ENCODE measurements at regions of chr19 and their contacts with region 1.

Region 1: DNA sequence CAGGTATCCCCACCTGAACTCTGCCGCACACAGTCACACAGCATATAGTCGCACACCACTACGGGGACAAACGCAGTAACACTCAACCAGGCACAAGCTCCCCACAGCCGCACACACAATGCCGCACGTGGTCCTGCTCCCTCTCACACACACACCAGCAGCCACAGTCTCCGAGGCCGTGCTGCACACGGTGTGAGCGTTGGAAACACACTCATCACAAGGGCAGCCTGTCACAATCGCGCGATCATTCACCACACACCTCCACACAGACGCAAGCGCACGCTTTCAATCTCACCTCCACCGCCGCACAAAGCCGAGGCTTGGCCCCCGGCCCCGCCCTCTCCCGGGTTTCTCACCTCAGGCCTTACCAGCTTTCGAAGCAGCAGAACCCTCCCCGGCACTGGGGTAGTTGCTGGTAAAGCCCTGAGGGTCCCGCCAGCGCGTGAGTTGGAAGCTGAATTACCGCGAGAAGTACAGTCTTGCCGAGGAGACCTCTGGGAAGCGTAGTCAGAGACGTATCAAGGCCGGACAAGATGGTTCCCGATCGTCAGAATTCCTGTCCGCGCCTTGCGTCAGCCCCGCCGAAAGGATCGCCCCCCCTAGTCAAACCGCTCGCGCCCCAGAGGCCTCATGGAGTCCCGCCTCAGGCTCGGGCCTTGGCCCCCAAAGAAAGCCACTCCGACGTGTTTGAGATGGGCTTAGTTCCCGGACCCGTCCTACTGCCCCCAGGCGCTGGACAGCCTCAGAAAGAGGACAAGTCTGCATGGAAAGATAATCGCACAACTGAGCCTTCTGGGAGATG is at the start of gene ZNF566:
- DNase-seq: peak; percentile 92
- H3K4me3 Mint-ChIP-seq: peak within 1 kb of the TSS; percentile 95
- H3K27ac Mint-ChIP-seq: peak within 1 kb of the TSS; percentile 97
- H3K4me1 Mint-ChIP-seq: peaks cover 26% of the 10 kb centered on the region
- H3K27me3 Mint-ChIP-seq: no peaks in the 10 kb centered on the region
- total RNA-seq, gene ZNF566: 8.5 to 8.7 TPM

Region 2: DNA sequence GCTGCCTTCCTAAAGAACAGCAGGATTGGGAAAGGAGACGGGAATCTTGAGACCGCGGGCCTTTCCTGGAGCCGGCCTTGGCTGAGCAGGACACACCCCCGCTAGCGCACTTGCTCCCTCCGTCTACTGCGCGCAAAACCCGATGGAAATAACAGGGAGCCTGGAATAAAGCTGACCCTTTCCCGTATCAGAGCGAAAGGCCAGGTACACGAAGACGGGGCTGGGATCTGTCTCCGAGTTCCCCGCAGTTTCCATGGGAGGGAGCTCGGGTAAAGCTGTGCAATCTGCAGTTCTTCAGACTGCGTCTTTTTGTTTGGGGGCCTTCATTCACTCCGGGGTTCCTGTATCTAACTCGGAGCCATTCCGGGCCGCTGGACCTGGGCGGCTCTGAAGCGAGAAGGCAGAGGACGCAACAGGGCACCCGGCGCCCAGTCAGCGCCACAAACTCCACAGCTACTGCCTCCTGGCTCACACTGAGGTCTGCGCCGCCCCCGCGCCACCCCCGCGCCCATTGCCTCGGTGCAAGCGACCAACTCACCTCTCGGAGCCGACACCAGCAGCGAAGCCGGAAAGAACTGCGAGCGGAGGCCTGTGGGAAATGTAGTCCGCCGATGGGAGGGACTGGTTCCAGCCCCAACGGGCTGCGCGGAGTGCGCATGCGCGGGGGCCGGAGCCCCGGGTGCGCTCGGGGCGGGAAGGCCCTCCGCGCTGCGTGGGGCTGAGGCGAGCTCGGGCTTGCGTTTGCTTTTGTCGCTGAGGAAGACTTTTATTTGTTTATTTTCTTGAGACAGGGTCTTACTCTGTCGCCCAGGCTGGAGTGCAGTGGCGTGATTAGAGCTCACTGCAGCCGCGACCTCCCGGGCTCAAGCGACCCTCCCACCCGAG is 110.5 kb before region 1 on chr19 and contains the start of gene ZFP14:
- CTCF ChIA-PET with region 1: interaction called, 3 read pairs
- POLR2A ChIA-PET with region 1: interaction called, 15 read pairs
- DNase-seq: peak; percentile 95
- H3K4me3 Mint-ChIP-seq: peak within 1 kb of the TSS; percentile 90
- H3K27ac Mint-ChIP-seq: peak within 1 kb of the TSS; percentile 71
- H3K4me1 Mint-ChIP-seq: peaks cover 12% of the 10 kb centered on the region
- H3K27me3 Mint-ChIP-seq: no peaks in the 10 kb centered on the region
- total RNA-seq, gene ZFP14: 5.1 to 5.4 TPM

Region 3: GRCh38 chr19:36418287-36419001 is 70.9 kb before region 1 on chr19 and contains the start of gene ZFP82:
- CTCF ChIA-PET with region 1: no interaction called
- POLR2A ChIA-PET with region 1: no interaction called
- DNase-seq: peak; percentile 76
- H3K4me3 Mint-ChIP-seq: peak within 1 kb of the TSS; percentile 86
- H3K27ac Mint-ChIP-seq: peak within 1 kb of the TSS; percentile 85
- H3K4me1 Mint-ChIP-seq: peaks cover 19% of the 10 kb centered on the region
- H3K27me3 Mint-ChIP-seq: peaks cover 7% of the 10 kb centered on the region
- total RNA-seq, gene ZFP82: 3.9 to 4.2 TPM

Region 4: DNA sequence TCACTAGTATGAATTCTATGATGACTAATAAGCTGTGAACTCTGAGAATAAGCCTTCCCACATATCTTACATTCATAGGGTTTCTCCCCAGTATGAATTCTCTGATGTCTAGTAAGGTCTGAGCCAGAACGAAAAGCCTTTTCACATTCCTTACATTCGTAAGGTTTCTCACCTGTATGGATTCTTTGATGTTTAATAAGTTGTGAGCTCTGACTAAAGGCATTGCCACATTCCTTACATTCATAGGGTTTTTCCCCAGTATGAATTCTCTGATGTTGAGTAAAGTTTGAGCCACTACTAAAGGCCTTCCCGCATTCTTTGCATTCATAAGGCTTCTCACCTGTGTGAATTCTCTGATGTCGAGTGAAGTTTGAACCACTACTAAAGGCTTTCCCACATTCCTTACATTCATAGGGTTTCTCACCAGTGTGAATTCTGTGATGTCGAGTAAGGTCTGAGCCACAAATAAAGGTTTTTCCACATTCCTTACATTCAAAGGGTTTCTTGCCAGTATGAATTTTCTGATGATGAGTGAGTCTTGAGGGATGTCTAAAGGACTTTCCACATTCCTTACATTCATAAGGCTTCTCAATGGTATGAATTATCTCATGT is 40.2 kb before region 1 on chr19:
- CTCF ChIA-PET with region 1: no interaction called
- POLR2A ChIA-PET with region 1: no interaction called
- DNase-seq: no peak
- H3K4me3 Mint-ChIP-seq: no peak overlapping the region
- H3K27ac Mint-ChIP-seq: no peak overlapping the region
- H3K4me1 Mint-ChIP-seq: no peaks in the 10 kb centered on the region
- H3K27me3 Mint-ChIP-seq: no peaks in the 10 kb centered on the region

Region 5: DNA sequence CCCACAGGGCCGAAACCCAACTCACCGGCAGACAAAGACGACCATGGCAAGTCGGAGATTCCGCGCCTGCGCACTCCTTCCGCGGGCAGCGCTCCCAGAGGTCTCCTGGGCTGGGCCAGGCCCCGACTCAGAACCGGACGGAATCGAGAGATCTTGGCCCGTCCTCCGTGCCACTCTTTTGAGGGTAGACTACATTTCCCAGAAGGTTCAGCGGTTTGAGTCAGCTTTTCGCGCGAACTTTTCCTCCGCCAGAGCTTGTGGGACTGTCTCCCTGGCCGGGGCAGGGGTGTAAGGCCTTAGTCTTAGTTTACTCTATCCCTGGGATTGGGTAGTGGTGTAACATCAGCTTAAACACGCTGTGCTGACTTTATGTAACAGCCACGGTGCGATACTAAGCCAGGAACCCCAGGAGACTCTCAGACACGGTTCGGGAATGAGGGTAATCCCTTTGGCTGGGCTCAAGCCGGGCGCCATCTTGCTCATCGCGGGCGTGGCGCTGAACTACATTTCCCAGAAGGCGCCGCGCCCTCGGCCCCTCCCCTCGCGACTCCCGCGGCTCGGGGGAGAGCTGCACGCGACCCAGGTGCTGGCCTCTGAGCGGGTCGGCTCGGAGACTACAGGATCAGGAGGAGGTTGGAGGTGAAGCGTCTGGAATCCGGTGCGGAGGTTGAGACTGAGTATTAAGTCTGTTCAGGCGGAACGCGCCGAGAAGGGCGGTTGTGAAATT is 39.0 kb after region 1 on chr19 and contains the start of gene ZNF260:
- CTCF ChIA-PET with region 1: no interaction called
- POLR2A ChIA-PET with region 1: interaction called, 27 read pairs
- DNase-seq: peak; percentile 91
- H3K4me3 Mint-ChIP-seq: peak within 1 kb of the TSS; percentile 94
- H3K27ac Mint-ChIP-seq: peak within 1 kb of the TSS; percentile 91
- H3K4me1 Mint-ChIP-seq: peaks cover 23% of the 10 kb centered on the region
- H3K27me3 Mint-ChIP-seq: no peaks in the 10 kb centered on the region
- total RNA-seq, gene ZNF260: 9.0 to 9.9 TPM

Region 6: DNA sequence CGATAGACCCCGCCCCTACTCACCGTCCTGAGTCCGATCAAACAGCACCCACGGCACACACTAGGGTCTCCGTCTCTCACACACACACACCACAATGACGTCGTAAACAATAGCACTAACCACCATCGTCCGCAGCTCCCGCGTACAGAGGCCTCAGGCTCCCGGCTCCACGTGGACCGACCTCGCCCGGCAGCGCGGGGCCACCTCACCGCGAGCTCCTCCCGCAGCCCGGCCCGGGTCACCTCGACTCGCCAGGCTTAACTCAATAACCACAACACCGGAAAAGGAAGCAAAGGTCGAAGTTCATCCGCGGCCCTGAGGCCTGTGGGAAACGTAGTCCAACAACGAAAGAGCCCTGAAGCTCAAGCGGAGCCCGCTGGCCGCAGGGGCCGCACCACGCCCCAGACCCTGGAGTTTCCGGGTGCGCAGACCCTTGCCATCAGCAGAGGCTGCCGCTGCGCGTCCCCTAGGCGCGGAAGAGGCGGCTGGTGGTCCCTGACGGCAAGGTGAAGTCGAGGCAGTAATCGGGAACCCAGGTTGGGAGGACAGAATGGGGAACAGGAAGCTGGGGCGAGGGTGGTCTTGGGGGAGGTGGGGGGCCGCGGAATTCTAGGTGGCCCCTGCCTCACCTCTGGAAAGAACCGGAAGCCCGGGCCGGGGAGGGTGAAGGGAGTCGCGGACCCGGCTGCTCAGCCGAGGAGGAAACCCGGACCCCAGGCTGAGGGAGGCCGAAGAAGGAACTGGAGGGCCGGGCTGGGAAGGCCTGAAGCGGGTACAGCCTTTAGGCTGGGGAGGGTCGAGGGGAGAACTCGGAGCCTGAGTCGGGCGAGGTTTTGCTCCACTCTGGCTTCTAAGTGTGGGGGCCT is 83.9 kb after region 1 on chr19 and contains the start of gene ZNF529:
- CTCF ChIA-PET with region 1: no interaction called
- POLR2A ChIA-PET with region 1: interaction called, 17 read pairs
- DNase-seq: peak; percentile 90
- H3K4me3 Mint-ChIP-seq: peak within 1 kb of the TSS; percentile 87
- H3K27ac Mint-ChIP-seq: peak within 1 kb of the TSS; percentile 90
- H3K4me1 Mint-ChIP-seq: peaks cover 33% of the 10 kb centered on the region
- H3K27me3 Mint-ChIP-seq: no peaks in the 10 kb centered on the region
- total RNA-seq, gene ZNF529: 11.1 to 14.6 TPM

Measured in activated CD4-positive, alpha-beta memory T cell treated with anti-CD3 and anti-CD28 coated beads, Interleukin-2, amount 10 ng/mL, durations not matched to agents 7 days and 5 days (primary cell).